B cell (primary cell): ENCODE measurements at regions of chr7 and their contacts with region 1.

Region 1: GRCh38 chr7:93231799-93232672 is at the start of gene VPS50:
- DNase-seq: peak; percentile 97
- ATAC-seq: peak; percentile 98
- H3K4me3 ChIP-seq: peak within 1 kb of the TSS; percentile 75 to 98 (median 90)
- H3K4me3 Mint-ChIP-seq: peak within 1 kb of the TSS; percentile 95
- H3K27ac ChIP-seq: peak within 1 kb of the TSS; percentile 81 to 90
- H3K27ac Mint-ChIP-seq: peak within 1 kb of the TSS; percentile 94
- H3K4me1 ChIP-seq: peaks cover 14 to 15% of the 10 kb centered on the region in 2 donors
- H3K4me1 Mint-ChIP-seq: peaks cover 25% of the 10 kb centered on the region
- H3K27me3 ChIP-seq: no peaks in the 10 kb centered on the region
- H3K27me3 Mint-ChIP-seq: no peaks in the 10 kb centered on the region
- CTCF ChIP-seq: no peak
- total RNA-seq, gene VPS50: 54.1 and 55.4 TPM in 2 replicates

Region 2: GRCh38 chr7:91940572-91941341 is 1291.3 kb before region 1 on chr7 and contains the start of gene AKAP9:
- CTCF ChIA-PET with region 1: no interaction called
- POLR2A ChIA-PET with region 1: no interaction called
- intact Hi-C with region 1: loop called (anchors 5 kb)
- DNase-seq: peak; percentile 93
- ATAC-seq: peak; percentile 92
- H3K4me3 ChIP-seq: peak within 1 kb of the TSS; percentile 74 to 98 (median 83)
- H3K4me3 Mint-ChIP-seq: peak within 1 kb of the TSS; percentile 95
- H3K27ac ChIP-seq: peak within 1 kb of the TSS; percentile 90 to 97
- H3K27ac Mint-ChIP-seq: peak within 1 kb of the TSS; percentile 95
- H3K4me1 ChIP-seq: peaks cover 20 to 22% of the 10 kb centered on the region in 2 donors
- H3K4me1 Mint-ChIP-seq: peaks cover 31% of the 10 kb centered on the region
- H3K27me3 ChIP-seq: no peaks in the 10 kb centered on the region
- H3K27me3 Mint-ChIP-seq: no peaks in the 10 kb centered on the region
- CTCF ChIP-seq: no peak
- total RNA-seq, gene AKAP9: 101 and 106 TPM in 2 replicates

Region 3: GRCh38 chr7:92528188-92528957 is 703.7 kb before region 1 on chr7 and contains the starts of genes PEX1 and RBM48:
- CTCF ChIA-PET with region 1: interaction called, 4 read pairs
- POLR2A ChIA-PET with region 1: no interaction called
- intact Hi-C with region 1: loop called (anchors 1 kb)
- DNase-seq: peak; percentile 98
- ATAC-seq: peak; percentile 91
- H3K4me3 ChIP-seq: peak within 1 kb of the TSS; percentile 81 to 99 (median 95)
- H3K4me3 Mint-ChIP-seq: peak within 1 kb of the TSS; percentile 88
- H3K27ac ChIP-seq: peak within 1 kb of the TSS; percentile 89 to 96
- H3K27ac Mint-ChIP-seq: peak within 1 kb of the TSS; percentile 95
- H3K4me1 ChIP-seq: peaks cover 14 to 19% of the 10 kb centered on the region in 2 donors
- H3K4me1 Mint-ChIP-seq: peaks cover 26% of the 10 kb centered on the region
- H3K27me3 ChIP-seq: no peaks in the 10 kb centered on the region
- H3K27me3 Mint-ChIP-seq: no peaks in the 10 kb centered on the region
- CTCF ChIP-seq: peak; percentile 31
- total RNA-seq, gene PEX1: 33.7 and 34.8 TPM in 2 replicates
- total RNA-seq, gene RBM48: 32.9 and 36.8 TPM in 2 replicates

Region 4: DNA sequence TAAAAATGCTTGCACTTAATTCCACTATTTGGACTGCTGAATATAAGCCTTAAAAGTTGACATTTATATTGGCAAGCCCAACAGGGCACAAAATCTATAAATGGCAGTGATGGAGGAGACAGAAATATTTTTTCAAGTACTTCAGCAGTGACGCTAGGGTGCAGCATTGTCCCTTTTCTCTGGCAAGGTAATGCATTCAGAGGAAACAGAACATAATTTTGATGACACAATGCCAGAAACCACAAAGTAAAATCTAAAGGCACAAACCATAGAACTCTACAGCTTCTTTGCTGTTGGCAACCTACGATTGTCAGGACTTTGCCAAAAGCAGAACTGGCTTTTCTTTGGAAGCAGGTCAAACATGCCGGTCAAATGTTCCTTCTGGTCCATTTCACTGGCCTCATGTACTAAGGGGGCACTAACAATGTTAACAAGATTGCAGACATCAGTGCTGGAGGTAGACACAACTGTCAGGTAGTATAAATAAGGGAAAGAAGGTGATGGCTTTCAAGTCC is 611.0 kb before region 1 on chr7:
- CTCF ChIA-PET with region 1: interaction called, 5 read pairs
- POLR2A ChIA-PET with region 1: no interaction called
- intact Hi-C with region 1: loop called (anchors 10 kb)
- DNase-seq: peak; percentile 78
- ATAC-seq: peak; percentile 78
- H3K4me3 ChIP-seq: no peak overlapping the region
- H3K4me3 Mint-ChIP-seq: no peak overlapping the region
- H3K27ac ChIP-seq: no peak overlapping the region
- H3K27ac Mint-ChIP-seq: peak overlapping the region; percentile 11
- H3K4me1 ChIP-seq: peaks cover 8 to 9% of the 10 kb centered on the region in 2 donors
- H3K4me1 Mint-ChIP-seq: peaks cover 8% of the 10 kb centered on the region
- H3K27me3 ChIP-seq: no peaks in the 10 kb centered on the region
- H3K27me3 Mint-ChIP-seq: no peaks in the 10 kb centered on the region
- CTCF ChIP-seq: peak; percentile 78

Region 5: DNA sequence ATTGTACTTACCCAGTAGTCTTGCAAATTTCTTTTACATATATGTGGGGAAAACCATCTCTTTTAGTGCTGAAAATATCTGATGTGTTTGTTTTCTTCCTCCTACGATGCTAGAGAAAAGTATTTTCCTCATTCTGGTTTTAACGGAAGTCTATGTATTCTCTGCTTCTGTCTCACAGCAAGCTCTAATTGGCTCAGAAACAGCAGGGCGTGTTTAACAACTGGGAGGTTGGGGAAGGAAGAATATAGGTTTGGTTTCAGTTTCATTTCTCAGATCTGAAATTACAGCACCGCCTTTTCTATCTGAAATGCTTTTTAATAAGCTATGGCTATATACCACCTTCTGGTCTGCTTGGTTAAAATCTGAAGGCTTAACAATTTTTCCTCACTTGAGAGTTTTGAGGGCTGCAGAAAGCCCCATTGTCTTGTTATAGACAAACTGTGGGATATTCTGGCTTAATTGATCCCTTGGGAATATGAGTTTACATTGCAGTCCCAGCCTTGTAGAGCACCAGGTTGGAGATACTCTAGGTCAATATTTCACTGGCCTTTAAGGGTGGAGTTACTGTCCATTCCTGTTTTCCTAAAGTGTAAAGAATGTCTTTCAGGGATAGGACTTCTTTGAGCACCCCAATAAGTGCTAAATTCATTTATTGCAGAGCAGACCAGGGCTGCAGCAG is 114.0 kb before region 1 on chr7 and contains the start of gene SAMD9:
- CTCF ChIA-PET with region 1: interaction called, 11 read pairs
- POLR2A ChIA-PET with region 1: interaction called, 3 read pairs
- intact Hi-C with region 1: loop called (anchors 1 kb)
- DNase-seq: peak; percentile 86
- ATAC-seq: peak; percentile 99
- H3K4me3 ChIP-seq: peak within 1 kb of the TSS; percentile 41 to 92 (median 59)
- H3K4me3 Mint-ChIP-seq: peak within 1 kb of the TSS; percentile 85
- H3K27ac ChIP-seq: peak within 1 kb of the TSS; percentile 56 to 83
- H3K27ac Mint-ChIP-seq: peak within 1 kb of the TSS; percentile 74
- H3K4me1 ChIP-seq: peaks cover 18 to 33% of the 10 kb centered on the region in 2 donors
- H3K4me1 Mint-ChIP-seq: peaks cover 44% of the 10 kb centered on the region
- H3K27me3 ChIP-seq: no peaks in the 10 kb centered on the region
- H3K27me3 Mint-ChIP-seq: no peaks in the 10 kb centered on the region
- CTCF ChIP-seq: no peak
- total RNA-seq, gene SAMD9: 39.2 and 42.1 TPM in 2 replicates

Region 6: DNA sequence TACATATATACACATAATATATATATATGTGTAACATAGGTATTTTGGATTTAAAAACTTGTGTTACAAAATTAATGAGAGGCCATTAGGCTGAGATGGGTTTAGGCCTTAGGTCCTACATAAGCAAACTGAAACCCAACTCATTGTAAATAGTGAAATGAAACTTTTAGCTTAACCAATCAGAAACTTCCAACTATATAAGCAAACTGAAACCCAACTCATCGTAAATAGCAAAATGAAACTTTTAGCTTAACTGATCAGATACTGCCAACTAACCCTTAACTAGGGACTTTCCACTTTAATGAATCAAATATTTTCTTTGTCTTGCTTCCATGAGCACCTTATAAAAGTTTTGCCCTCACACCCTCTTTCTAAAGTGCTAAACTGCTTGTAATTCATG is 66.6 kb before region 1 on chr7:
- CTCF ChIA-PET with region 1: no interaction called
- POLR2A ChIA-PET with region 1: no interaction called
- intact Hi-C with region 1: loop called (anchors 5 kb)
- DNase-seq: peak; percentile 77
- ATAC-seq: peak; percentile 93
- H3K4me3 ChIP-seq: peak overlapping the region in 2 of 5 experiments; percentile 5 to 15
- H3K4me3 Mint-ChIP-seq: peak overlapping the region; percentile 38
- H3K27ac ChIP-seq: peak overlapping the region; percentile 59 to 81
- H3K27ac Mint-ChIP-seq: peak overlapping the region; percentile 74
- H3K4me1 ChIP-seq: peaks cover 4 to 8% of the 10 kb centered on the region in 2 donors
- H3K4me1 Mint-ChIP-seq: peaks cover 19% of the 10 kb centered on the region
- H3K27me3 ChIP-seq: no peaks in the 10 kb centered on the region
- H3K27me3 Mint-ChIP-seq: no peaks in the 10 kb centered on the region
- CTCF ChIP-seq: no peak

Region 7: GRCh38 chr7:94509879-94510581 is 1278.0 kb after region 1 on chr7:
- CTCF ChIA-PET with region 1: no interaction called
- POLR2A ChIA-PET with region 1: no interaction called
- intact Hi-C with region 1: loop called (anchors 10 kb)
- DNase-seq: peak; percentile 88
- ATAC-seq: peak; percentile 76
- H3K4me3 ChIP-seq: peak overlapping the region; percentile 31 to 80 (median 73)
- H3K4me3 Mint-ChIP-seq: peak overlapping the region; percentile 88
- H3K27ac ChIP-seq: peak overlapping the region; percentile 77 to 92
- H3K27ac Mint-ChIP-seq: peak overlapping the region; percentile 93
- H3K4me1 ChIP-seq: peaks cover 18 to 20% of the 10 kb centered on the region in 2 donors
- H3K4me1 Mint-ChIP-seq: peaks cover 46% of the 10 kb centered on the region
- H3K27me3 ChIP-seq: no peaks in the 10 kb centered on the region
- H3K27me3 Mint-ChIP-seq: no peaks in the 10 kb centered on the region
- CTCF ChIP-seq: peak; percentile 5